Esophagus muscularis mucosa (tissue), 4 donors: ENCODE measurements at regions of chr5 and their contacts with region 1.

Region 1: GRCh38 chr5:150946351-150946905 is 41.6 kb upstream of the ZNF300 start:
- DNase-seq: peak; percentile 94
- H3K4me3 ChIP-seq: peak overlapping the region; percentile 66 to 74 (median 66)
- H3K27ac ChIP-seq: peak overlapping the region; percentile 75 to 86 (median 82)
- H3K4me1 ChIP-seq: peaks cover 0 to 11% (median 0%) of the 10 kb centered on the region in 4 donors
- H3K27me3 ChIP-seq: no peaks in the 10 kb centered on the region
- CTCF ChIP-seq: no peak
- EP300 ChIP-seq: no peak
- POLR2A ChIP-seq: no peak

Region 2: GRCh38 chr5:150879358-150879757 is 67.1 kb before region 1 on chr5:
- intact Hi-C with region 1: loop called (anchors 10 kb)
- DNase-seq: no peak
- H3K4me3 ChIP-seq: no peak overlapping the region
- H3K27ac ChIP-seq: no peak overlapping the region
- H3K4me1 ChIP-seq: no peaks in the 10 kb centered on the region
- H3K27me3 ChIP-seq: no peaks in the 10 kb centered on the region
- CTCF ChIP-seq: no peak
- EP300 ChIP-seq: no peak
- POLR2A ChIP-seq: no peak

Region 3: DNA sequence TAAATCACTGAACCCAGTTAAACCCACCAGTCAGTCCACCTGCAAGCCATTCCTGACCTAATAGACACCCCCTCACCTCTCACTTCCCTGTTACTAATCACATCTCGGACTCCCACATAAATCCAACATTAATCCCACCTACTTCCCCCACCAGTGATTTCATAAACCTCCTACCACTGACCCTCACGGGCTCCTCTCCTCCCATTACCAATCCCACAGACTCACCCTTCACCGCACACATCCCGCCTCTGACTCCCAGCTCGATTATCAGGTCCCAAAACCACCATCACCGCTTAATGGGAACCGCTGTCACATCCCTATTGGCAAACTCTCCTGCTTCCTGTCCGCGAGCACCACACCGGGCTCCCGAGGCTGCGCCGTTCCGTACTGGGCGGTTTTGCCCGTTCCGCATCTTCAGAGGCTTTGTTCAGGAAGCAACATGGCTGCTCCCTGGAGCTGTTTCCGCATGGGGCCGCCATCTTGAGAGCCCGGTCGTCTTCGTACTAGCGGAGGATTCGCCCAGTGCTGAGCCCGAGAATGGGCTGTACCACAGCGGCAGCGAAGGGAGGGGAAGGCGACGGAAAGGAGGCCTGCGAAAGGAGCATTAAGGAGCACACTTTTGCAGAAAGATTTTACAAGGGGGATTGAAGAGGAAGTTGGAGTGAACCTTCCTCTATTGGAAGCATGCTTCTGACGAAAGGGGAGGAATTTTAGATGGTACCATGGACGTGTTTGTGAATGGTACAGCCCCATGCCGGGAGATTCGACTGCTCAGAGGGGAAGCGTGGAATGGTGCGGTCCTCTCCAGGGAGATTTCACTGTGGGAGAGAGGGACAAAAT is 41.7 kb before region 1 on chr5 and contains the start of gene ZNF300:
- intact Hi-C with region 1: loop called (anchors 2 kb)
- DNase-seq: peak; percentile 92
- H3K4me3 ChIP-seq: peak within 1 kb of the TSS; percentile 52 to 63 (median 58)
- H3K27ac ChIP-seq: peak within 1 kb of the TSS; percentile 47 to 69 (median 68)
- H3K4me1 ChIP-seq: peaks cover 0 to 12% (median 5%) of the 10 kb centered on the region in 4 donors
- H3K27me3 ChIP-seq: no peaks in the 10 kb centered on the region
- CTCF ChIP-seq: no peak
- EP300 ChIP-seq: no peak
- POLR2A ChIP-seq: no peak
- total RNA-seq, gene ZNF300: 1.7 to 3.1 (median 2.4) TPM